Lower leg skin (tissue), 4 donors: ENCODE measurements at regions of chr9 and their contacts with region 1.

Region 1: DNA sequence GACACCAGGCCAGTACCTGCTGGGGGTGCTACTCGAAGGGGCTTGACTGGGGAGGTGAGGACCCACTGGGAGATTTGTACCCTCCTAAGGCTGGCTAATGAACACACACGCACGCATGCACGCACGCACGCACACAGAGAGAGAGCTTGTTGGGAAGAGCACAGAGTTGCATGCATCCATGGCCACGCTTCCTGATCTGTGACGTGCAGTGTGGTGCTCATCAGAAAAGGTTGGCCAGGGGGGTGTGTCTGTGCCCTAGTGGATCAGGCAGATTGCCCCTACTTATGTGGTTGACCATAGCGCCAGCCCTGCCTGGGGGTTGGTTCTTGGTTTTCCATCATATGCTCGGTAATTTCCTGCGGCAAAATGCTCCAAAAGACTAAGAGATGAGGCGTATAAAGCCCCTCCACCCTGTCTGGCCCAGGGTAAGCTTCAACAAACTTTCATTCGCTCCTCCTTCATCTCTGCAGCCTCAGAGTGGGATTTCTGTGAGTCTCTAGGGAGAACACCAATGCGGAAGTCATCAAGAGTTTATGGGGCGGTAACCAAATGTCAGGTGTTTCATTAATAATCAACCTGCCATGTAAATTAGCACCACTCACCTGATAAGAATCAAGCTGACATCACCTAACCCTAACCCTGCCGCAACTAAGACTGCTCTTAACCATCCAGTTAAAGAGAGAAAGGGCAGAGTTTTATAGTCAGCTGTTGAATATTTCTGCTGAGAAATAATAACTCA is 8.0 kb upstream of the GFI1B start:
- DNase-seq: no peak
- H3K4me3 ChIP-seq: no peak overlapping the region
- CTCF ChIP-seq: no peak
- POLR2A ChIP-seq: no peak

Region 2: GRCh38 chr9:132516911-132517310 is 453.6 kb before region 1 on chr9:
- intact Hi-C with region 1: loop called (anchors 2 kb)
- DNase-seq: no peak
- H3K4me3 ChIP-seq: no peak overlapping the region
- CTCF ChIP-seq: no peak
- POLR2A ChIP-seq: no peak

Region 3: GRCh38 chr9:132732326-132733259 is 237.9 kb before region 1 on chr9:
- intact Hi-C with region 1: no loop called
- DNase-seq: no peak
- H3K4me3 ChIP-seq: no peak overlapping the region
- CTCF ChIP-seq: no peak
- POLR2A ChIP-seq: no peak